GM13976 (cell line): ENCODE measurements at regions of chr6 and their contacts with region 1.

Region 1: DNA sequence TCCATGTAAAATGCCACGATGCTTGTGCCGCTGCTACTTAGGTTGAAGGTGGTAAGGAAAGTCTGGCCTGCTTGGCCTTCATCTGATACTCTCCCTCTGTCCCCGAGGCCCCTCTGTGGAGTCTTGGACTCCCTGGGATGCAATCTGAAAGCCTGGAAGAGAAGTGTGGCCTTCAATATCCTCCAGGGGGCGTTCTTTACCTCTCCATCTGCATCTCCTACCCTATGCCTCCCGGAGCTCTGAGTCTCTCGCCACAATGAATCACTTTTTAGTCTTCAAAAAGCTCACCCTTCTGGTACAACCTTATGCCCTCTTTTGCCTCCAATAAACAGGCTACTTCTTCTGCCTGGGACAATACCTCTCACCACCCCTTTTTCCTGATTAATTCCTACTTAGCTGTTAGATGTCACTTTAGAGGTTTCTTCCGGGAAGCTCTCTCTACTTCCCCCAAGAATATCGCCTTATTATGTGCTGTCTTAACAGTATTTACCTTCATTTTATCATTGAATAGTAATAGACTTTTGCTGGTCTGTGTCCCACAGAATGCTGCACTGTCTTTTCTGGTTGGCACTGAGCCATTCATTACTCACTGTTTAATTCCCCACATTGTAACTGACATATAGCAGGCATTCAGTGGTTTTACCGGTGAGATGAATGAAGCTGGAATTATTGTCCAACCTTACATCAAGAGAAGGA is 13.9 kb upstream of the ATG5 start:
- DNase-seq: peak; percentile 63
- CTCF ChIP-seq: peak; percentile 34

Region 2: GRCh38 chr6:106117579-106117978 is 221.9 kb before region 1 on chr6:
- in situ Hi-C with region 1: no loop called
- DNase-seq: peak; percentile 42
- CTCF ChIP-seq: no peak

Region 3: GRCh38 chr6:106439446-106439845 is 100.0 kb after region 1 on chr6:
- in situ Hi-C with region 1: loop called (anchors 10 kb)
- DNase-seq: no peak
- CTCF ChIP-seq: no peak

Region 4: GRCh38 chr6:106574741-106575458 is 235.4 kb after region 1 on chr6:
- in situ Hi-C with region 1: loop called (anchors 10 kb)
- DNase-seq: no peak
- CTCF ChIP-seq: no peak